ENCODE measurements at regions of chr11 and their contacts with region 1.

Region 1: GRCh38 chr11:63945477-63946163 is 6.8 kb downstream of the NAA40 start:
- DNase-seq: peak; percentile 82 to 93
- H3K4me3 ChIP-seq: peak overlapping the region; percentile 4 to 42 (median 12)
- H3K27ac ChIP-seq: peak overlapping the region; percentile 70 to 71
- H3K4me1 ChIP-seq: peaks cover 0 to 6% of the 10 kb centered on the region in 2 donors
- H3K27me3 ChIP-seq: no peaks in the 10 kb centered on the region
- CTCF ChIP-seq: peak; percentile 90 to 96 (median 93)
- POLR2A ChIP-seq: no peak

Region 2: GRCh38 chr11:63838678-63839507 is 106.7 kb before region 1 on chr11 and contains the start of gene MARK2:
- intact Hi-C with region 1: loop called (anchors 5 kb)
- DNase-seq: peak; percentile 97 to 99
- H3K4me3 ChIP-seq: peak within 1 kb of the TSS; percentile 66 to 93 (median 93)
- H3K27ac ChIP-seq: peak within 1 kb of the TSS; percentile 88 to 93
- H3K4me1 ChIP-seq: peaks cover 0 to 21% of the 10 kb centered on the region in 2 donors
- H3K27me3 ChIP-seq: no peaks in the 10 kb centered on the region
- CTCF ChIP-seq: peak in 1 of 3 donors; percentile 24
- POLR2A ChIP-seq: peak; percentile 71
- total RNA-seq, gene MARK2: 12.6 to 34.0 (median 22.3) TPM